HCT116 (cell line): ENCODE measurements at regions of chr5 and their contacts with region 1.

Region 1: DNA sequence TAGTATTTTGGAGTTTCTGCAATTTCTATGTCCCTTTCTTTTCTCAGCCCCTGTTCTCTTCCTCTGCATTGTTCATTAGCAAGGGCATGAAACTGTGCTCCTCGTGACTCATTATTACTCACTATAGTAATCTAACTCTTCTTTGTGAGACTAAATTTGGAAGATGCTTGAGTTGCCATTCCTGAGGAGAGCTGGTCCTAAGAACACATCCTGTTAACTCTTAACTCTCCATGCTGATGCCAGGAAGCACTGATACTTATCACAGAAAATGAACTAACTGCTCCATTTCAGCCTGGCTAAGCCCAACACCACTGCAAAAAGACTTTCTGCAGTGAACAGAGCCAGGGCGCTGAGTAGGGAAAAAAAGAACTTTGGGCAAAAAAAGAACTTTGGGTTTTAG is 10.6 kb upstream of the CSNK1A1 start:
- DNase-seq: peak; percentile 95
- ATAC-seq: peak; percentile 79
- H3K4me3 ChIP-seq: peak overlapping the region; percentile 28 to 50
- H3K27ac ChIP-seq: peak overlapping the region; percentile 89
- H3K4me1 ChIP-seq: peaks cover 43 to 64% of the 10 kb centered on the region in 2 experiments
- H3K27me3 ChIP-seq: no peaks in the 10 kb centered on the region
- CTCF ChIP-seq: no peak
- POLR2A ChIP-seq: no peak
- RAD21 ChIP-seq: no peak

Region 2: DNA sequence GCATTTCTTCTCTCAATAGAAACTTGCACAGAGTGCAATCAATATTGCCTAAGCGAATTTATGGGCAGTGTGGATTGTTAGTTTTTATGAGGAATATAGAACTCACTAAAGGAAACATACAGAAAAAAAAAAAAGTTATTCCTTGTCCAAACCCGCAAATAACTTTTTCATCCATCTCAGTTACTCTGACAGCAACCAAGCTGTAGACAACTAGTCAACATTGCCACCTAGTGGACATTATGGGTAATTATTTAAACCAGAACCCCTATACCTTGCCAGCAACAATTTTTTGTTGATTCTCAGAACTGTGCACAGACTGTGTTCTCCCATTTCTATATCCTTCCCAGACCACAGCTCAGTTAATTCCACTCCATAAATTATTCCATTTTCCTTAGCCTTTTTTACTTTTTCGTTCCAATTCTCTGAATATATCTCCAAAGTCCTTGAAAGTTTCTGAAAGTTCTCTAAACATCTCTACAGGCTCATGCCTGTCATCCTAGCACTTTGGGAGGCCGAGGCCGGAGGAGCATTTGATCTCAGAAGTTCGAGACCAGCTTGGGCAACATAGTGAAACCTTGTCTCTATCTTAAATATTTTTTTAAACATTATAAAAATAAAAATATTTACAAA is 292.8 kb before region 1 on chr5:
- CTCF ChIA-PET with region 1: interaction called, 3 read pairs
- POLR2A ChIA-PET with region 1: no interaction called
- RAD21 ChIA-PET with region 1: interaction called in 1 of 2 experiments, 3 read pairs
- intact Hi-C with region 1: loop called (anchors 10 kb)
- DNase-seq: peak; percentile 55
- ATAC-seq: peak; percentile 26
- H3K4me3 ChIP-seq: no peak overlapping the region
- H3K27ac ChIP-seq: no peak overlapping the region
- H3K4me1 ChIP-seq: peaks cover 0 to 8% of the 10 kb centered on the region in 2 experiments; a peak in 2 of 4 replicates
- H3K27me3 ChIP-seq: no peaks in the 10 kb centered on the region
- CTCF ChIP-seq: peak; percentile 55 to 82 (median 69)
- POLR2A ChIP-seq: no peak
- RAD21 ChIP-seq: peak; percentile 82

Region 3: GRCh38 chr5:149367249-149367971 is 194.4 kb before region 1 on chr5:
- CTCF ChIA-PET with region 1: interaction called, 15 read pairs
- POLR2A ChIA-PET with region 1: no interaction called
- RAD21 ChIA-PET with region 1: no interaction called
- intact Hi-C with region 1: loop called (anchors 1 kb)
- DNase-seq: peak; percentile 79
- ATAC-seq: peak; percentile 82
- H3K4me3 ChIP-seq: no peak overlapping the region
- H3K27ac ChIP-seq: no peak overlapping the region
- H3K4me1 ChIP-seq: peaks cover 4 to 9% of the 10 kb centered on the region in 2 experiments; a peak in 3 of 4 replicates
- H3K27me3 ChIP-seq: no peaks in the 10 kb centered on the region
- CTCF ChIP-seq: peak; percentile 93 to 97 (median 94)
- POLR2A ChIP-seq: no peak
- RAD21 ChIP-seq: peak; percentile 86

Region 4: DNA sequence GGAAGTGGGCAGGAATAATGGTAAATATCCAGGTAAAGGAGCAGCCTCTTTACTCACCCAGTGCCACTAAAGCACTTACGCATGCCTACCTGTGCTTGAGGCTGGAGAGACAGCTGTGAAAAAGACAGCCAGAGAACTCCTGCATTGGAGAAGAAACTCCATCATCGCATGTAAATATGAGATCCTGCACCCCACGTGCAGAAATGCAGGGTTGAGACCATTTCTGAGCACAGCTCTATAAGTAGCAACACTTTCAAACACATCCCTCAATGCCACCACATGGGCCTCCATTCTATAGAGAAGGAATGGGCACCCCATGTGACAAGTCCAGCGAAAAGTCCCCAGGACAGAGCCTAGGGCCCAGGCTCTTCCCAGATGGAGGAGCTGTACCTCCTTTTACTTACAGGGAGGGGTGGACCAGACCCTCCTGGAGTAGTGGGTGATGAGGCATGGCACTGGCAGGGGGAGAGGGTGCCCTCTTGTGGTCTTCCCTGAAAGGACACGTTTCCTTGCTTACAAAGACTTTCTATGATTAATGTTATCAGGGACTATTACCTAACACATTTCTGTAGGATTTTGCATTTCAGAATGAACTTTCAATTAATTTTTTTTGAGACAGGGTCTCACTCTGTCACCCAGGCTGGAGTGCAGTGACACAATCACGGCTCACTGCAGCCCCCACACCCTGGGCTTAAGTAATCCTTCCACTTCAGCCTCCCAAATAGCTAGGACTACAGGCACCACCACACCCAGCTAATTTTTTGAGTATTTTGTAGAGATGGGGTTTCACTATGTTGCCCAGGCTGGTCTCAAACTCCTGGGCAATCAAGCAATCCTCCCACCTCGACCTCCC is 127.5 kb before region 1 on chr5:
- CTCF ChIA-PET with region 1: interaction called, 45 read pairs
- POLR2A ChIA-PET with region 1: interaction called, 32 read pairs
- RAD21 ChIA-PET with region 1: no interaction called
- intact Hi-C with region 1: loop called (anchors 2 kb)
- DNase-seq: no peak
- ATAC-seq: peak; percentile 44
- H3K4me3 ChIP-seq: no peak overlapping the region
- H3K27ac ChIP-seq: no peak overlapping the region
- H3K4me1 ChIP-seq: peaks cover 19 to 58% of the 10 kb centered on the region in 2 experiments
- H3K27me3 ChIP-seq: no peaks in the 10 kb centered on the region
- CTCF ChIP-seq: peak in 2 of 3 experiments; percentile 92 to 93; a peak in 4 of 6 replicates
- POLR2A ChIP-seq: no peak
- RAD21 ChIP-seq: no peak

Region 5: DNA sequence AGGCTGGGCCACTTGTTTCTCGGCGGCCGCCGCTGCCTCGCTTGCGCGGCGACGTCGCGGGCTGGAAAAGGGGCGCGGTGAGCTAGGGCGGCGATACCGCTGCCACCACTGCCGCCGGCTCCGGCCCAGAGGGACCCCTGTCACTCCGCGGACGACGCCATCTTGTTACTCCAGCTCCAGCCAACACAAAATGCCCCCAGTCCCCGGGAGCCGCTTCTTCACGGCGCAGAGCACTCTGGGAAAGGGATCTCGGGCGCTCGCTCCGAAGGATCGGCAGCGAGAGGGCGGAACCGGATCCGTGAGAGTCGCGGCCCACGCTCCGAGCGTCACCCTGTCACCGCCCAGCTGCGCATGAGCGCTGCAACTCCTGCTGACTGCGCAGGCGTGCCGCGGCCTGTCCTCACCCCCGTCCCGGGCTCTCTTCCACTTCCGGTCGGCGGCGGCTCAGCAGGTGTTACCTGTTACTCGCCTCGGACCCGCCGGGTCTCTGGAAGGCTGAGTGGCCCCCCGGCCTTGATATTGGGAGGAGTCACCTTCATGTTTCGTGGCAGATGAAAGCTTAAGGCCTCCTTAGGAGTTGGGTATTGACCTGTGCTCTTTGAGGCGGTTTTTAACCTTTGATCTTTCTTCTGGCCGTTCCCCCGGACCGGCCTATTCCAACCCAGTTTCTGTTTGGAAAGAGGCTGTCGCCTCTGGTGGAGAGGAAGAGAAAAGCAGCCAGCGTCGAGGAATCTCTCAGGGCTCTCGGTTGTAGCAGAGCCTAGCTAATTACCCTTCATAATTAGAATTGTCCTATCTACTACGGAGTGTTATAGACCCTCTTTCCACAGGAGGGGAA is 10.4 kb before region 1 on chr5 and contains the start of gene CSNK1A1:
- CTCF ChIA-PET with region 1: interaction called, 22 read pairs
- POLR2A ChIA-PET with region 1: interaction called, 56 read pairs
- RAD21 ChIA-PET with region 1: interaction called, 3 to 5 read pairs
- intact Hi-C with region 1: no loop called
- DNase-seq: peak; percentile 96
- ATAC-seq: peak; percentile 93
- H3K4me3 ChIP-seq: peak within 1 kb of the TSS; percentile 85 to 99
- H3K27ac ChIP-seq: peak within 1 kb of the TSS; percentile 93
- H3K4me1 ChIP-seq: peaks cover 11 to 64% of the 10 kb centered on the region in 2 experiments; a peak in 3 of 4 replicates
- H3K27me3 ChIP-seq: no peaks in the 10 kb centered on the region
- CTCF ChIP-seq: peak in 2 of 3 experiments; percentile 76 to 84; a peak in 4 of 6 replicates
- POLR2A ChIP-seq: peak; percentile 84
- RAD21 ChIP-seq: no peak
- total RNA-seq, gene CSNK1A1: 263 TPM